ENCODE measurements at regions of chr12 and their contacts with region 1.

Region 1: DNA sequence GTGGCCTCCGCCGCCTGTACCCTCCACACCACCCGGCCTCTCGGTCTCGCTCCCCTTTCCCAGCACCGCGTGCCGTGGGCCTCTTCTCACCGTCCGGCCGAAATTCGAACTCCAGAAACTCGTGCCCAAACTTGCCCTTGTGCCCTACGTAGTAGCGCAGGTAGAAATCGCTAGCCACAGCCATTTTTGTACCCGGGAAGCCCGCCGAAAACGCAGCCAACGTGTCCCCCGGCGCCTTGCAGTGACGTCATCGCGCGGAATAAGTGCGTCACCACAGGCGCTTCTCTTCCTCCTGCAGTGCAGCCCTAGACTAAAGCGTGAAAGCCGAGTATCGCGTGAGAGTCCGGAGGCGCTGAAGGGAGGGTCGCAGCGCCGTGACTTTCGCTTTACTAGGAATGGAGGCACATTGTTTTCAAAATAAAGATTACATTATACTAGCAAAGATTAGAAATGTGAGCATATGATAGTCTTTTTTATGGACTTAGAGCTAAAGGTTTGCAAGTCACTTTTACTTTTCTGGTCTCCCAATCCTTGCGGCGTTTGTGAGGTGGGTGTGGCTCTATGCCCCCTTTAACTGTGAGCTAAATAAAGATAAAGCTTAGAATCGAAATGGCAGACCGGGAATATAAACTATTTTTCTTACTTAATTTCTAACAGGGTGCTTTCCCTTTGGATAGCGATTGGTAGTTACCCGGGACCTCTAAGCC is at the start of gene MAGOHB:
- DNase-seq: peak; percentile 96
- ATAC-seq: peak; percentile 96
- H3K4me3 ChIP-seq: peak within 1 kb of the TSS; percentile 80
- H3K27ac ChIP-seq: peak within 1 kb of the TSS; percentile 93
- H3K4me1 ChIP-seq: peaks cover 8% of the 10 kb centered on the region
- H3K27me3 ChIP-seq: no peaks in the 10 kb centered on the region
- CTCF ChIP-seq: no peak
- POLR2A ChIP-seq: peak; percentile 69; the same call in 1 of the 2 replicates
- RAD21 ChIP-seq: no peak
- total RNA-seq, gene MAGOHB: 6.3 and 23.3 TPM in 2 replicates

Region 2: DNA sequence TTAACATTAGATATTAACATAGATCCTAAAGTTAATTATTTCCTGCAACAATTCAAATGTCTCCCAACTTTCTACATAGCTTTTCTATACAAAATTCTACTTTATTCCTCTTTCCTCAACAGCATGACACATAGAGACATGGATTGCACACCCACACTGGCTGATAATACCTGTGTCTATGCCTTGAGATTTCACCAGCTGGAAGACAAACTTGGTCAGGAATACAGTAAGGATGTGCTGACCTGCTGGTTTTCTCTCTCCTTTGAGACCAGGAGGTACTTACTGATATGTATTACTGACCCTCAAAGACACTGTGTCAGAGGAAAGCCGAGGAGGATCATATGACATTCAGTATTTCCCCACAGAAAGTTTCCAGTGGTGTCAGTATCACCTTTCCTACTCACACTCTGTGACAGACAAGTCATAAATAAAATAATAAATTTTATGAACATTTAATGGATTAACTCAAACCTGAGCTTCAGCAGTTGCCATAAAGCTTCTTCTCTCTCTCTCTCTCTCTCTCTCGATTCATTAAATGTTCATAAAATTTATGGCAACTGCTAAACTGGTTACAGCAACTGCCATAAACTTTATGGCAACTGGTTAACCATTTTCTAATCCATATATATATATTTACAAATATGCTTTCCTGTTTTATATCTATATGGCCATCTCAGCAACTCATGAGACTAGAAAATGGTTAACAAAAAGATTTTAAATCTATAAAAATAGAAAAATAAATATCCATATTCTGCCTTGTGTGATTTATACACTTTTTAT is 85.1 kb before region 1 on chr12:
- CTCF ChIA-PET with region 1: no interaction called
- POLR2A ChIA-PET with region 1: no interaction called
- dilution Hi-C with region 1: no loop called
- in situ Hi-C with region 1: no loop called
- intact Hi-C with region 1: no loop called
- DNase-seq: no peak
- ATAC-seq: no peak
- H3K4me3 ChIP-seq: no peak overlapping the region
- H3K27ac ChIP-seq: no peak overlapping the region
- H3K4me1 ChIP-seq: no peaks in the 10 kb centered on the region
- H3K27me3 ChIP-seq: no peaks in the 10 kb centered on the region
- CTCF ChIP-seq: no peak
- POLR2A ChIP-seq: no peak
- RAD21 ChIP-seq: no peak

Region 3: DNA sequence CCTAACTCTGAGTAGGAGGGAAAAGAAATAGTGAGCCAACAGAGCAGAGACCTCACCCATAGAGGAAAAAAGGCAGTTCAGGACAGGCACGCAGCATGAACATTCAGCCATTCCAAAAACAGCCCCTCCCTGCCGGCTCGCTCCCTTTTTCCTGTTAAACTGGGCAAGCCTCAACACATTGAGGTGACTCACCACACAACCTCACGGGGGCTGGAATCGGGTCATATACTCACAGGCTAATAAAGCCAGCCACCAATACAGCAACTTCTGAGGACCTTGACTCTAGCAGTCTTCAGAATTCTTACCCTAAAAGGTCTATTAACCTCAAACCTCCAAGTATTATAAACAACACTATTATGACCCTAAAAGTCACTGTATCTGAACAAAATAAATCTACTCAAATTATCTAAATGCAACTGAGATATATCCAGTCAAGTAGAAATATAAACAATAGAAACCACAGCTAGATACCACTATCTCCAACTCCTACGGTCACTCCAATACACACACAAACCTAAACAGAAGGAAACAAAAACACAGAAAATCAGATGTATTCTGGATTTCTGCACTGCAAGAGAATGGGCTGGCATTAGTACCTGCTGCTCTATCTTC is 103.3 kb after region 1 on chr12:
- CTCF ChIA-PET with region 1: interaction called, 3 read pairs
- POLR2A ChIA-PET with region 1: no interaction called
- dilution Hi-C with region 1: no loop called
- in situ Hi-C with region 1: no loop called
- intact Hi-C with region 1: loop called (anchors 1 kb)
- DNase-seq: peak; percentile 92
- ATAC-seq: peak; percentile 76
- H3K4me3 ChIP-seq: peak overlapping the region; percentile 22; the same call in 1 of the 2 replicates
- H3K27ac ChIP-seq: peak overlapping the region; percentile 64; the same call in 1 of the 2 replicates
- H3K4me1 ChIP-seq: peaks cover 5% of the 10 kb centered on the region; the same call in 1 of the 2 replicates
- H3K27me3 ChIP-seq: no peaks in the 10 kb centered on the region
- CTCF ChIP-seq: no peak
- POLR2A ChIP-seq: peak; percentile 22; the same call in 1 of the 2 replicates
- RAD21 ChIP-seq: peak; percentile 9; the same call in 1 of the 2 replicates

Region 4: GRCh38 chr12:10721651-10722501 is 108.4 kb after region 1 on chr12:
- CTCF ChIA-PET with region 1: interaction called, 3 read pairs
- POLR2A ChIA-PET with region 1: no interaction called
- dilution Hi-C with region 1: no loop called
- in situ Hi-C with region 1: no loop called
- intact Hi-C with region 1: loop called (anchors 1 kb)
- DNase-seq: peak; percentile 99
- ATAC-seq: peak; percentile 55
- H3K4me3 ChIP-seq: peak overlapping the region; percentile 83
- H3K27ac ChIP-seq: peak overlapping the region; percentile 84
- H3K4me1 ChIP-seq: peaks cover 5% of the 10 kb centered on the region
- H3K27me3 ChIP-seq: no peaks in the 10 kb centered on the region
- CTCF ChIP-seq: no peak
- POLR2A ChIP-seq: peak; percentile 84
- RAD21 ChIP-seq: no peak

Region 5: GRCh38 chr12:11202811-11203210 is 589.3 kb after region 1 on chr12:
- CTCF ChIA-PET with region 1: no interaction called
- POLR2A ChIA-PET with region 1: no interaction called
- dilution Hi-C with region 1: no loop called
- in situ Hi-C with region 1: no loop called
- intact Hi-C with region 1: loop called (anchors 10 kb)
- DNase-seq: no peak
- ATAC-seq: no peak
- H3K4me3 ChIP-seq: no peak overlapping the region
- H3K27ac ChIP-seq: no peak overlapping the region
- H3K4me1 ChIP-seq: no peaks in the 10 kb centered on the region
- H3K27me3 ChIP-seq: no peaks in the 10 kb centered on the region; the same call in 1 of the 2 replicates
- CTCF ChIP-seq: no peak
- POLR2A ChIP-seq: no peak
- RAD21 ChIP-seq: no peak

Measured in IMR-90 (cell line).